ENCODE measurements at regions of chr4 and their contacts with region 1.

Region 1: GRCh38 chr4:36351082-36351666 is 69.8 kb downstream of the DTHD1 start:
- DNase-seq: peak; percentile 82
- H3K4me3 ChIP-seq: no peak overlapping the region
- H3K27ac ChIP-seq: no peak overlapping the region
- H3K4me1 ChIP-seq: peaks cover 0 to 28% (median 14%) of the 10 kb centered on the region in 6 donors
- H3K27me3 ChIP-seq: no peaks in the 10 kb centered on the region
- CTCF ChIP-seq: peak; percentile 60 to 85 (median 76)
- POLR2A ChIP-seq: no peak

Region 2: DNA sequence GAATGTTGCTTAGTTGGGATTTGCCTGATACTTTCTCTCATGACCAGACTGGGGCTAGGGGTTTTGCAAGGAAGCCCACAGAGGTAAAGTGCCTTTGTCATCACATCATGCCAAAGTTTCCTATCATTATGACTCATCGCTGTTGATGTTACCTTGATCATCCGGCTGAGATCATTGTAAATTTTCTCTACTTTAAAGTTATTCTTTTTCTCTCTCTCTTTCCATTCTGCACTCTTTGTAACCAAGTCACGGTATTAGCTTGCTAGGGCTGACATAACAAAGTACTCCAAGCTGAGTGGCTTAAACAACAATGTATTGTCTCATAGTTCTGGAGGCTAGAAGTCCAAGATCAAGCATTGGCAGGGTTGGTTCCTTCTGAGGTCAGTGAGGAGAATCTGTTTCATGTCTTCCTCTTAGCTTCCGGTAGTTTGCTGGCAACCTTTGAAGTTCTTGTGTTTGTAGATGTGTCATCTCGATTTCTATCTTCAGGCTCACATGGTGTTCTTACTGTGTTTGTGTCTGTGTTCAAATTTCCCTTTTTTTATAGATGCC is 43.3 kb after region 1 on chr4:
- intact Hi-C with region 1: loop called (anchors 5 kb)
- DNase-seq: no peak
- H3K4me3 ChIP-seq: no peak overlapping the region
- H3K27ac ChIP-seq: peak overlapping the region in 2 of 8 donors; percentile 1 to 8
- H3K4me1 ChIP-seq: peaks cover 0 to under 1% (median 0%) of the 10 kb centered on the region in 6 donors
- H3K27me3 ChIP-seq: peaks cover 0 to 11% (median 0%) of the 10 kb centered on the region in 7 donors
- CTCF ChIP-seq: no peak
- POLR2A ChIP-seq: no peak

Region 3: GRCh38 chr4:37389967-37390580 is 1038.9 kb after region 1 on chr4:
- intact Hi-C with region 1: loop called (anchors 10 kb)
- DNase-seq: no peak
- H3K4me3 ChIP-seq: no peak overlapping the region
- H3K27ac ChIP-seq: no peak overlapping the region
- H3K4me1 ChIP-seq: peaks cover 0 to 23% (median 4%) of the 10 kb centered on the region in 6 donors
- H3K27me3 ChIP-seq: no peaks in the 10 kb centered on the region
- CTCF ChIP-seq: peak; percentile 24 to 65 (median 49)
- POLR2A ChIP-seq: no peak